CD4-positive, alpha-beta memory T cell (primary cell): ENCODE measurements at regions of chr17 and their contacts with region 1.

Region 1: GRCh38 chr17:75319904-75320691 is 30.9 kb upstream of the SLC25A19 start:
- DNase-seq: no peak
- H3K4me3 ChIP-seq: no peak overlapping the region
- H3K4me3 Mint-ChIP-seq: no peak overlapping the region
- H3K27ac ChIP-seq: no peak overlapping the region
- H3K27ac Mint-ChIP-seq: peak overlapping the region in 3 of 7 donors; percentile 2 to 32 (median 30)
- H3K4me1 ChIP-seq: peaks cover 10% of the 10 kb centered on the region
- H3K4me1 Mint-ChIP-seq: peaks cover 6 to 8% (median 7%) of the 10 kb centered on the region in 4 donors
- H3K27me3 ChIP-seq: no peaks in the 10 kb centered on the region
- H3K27me3 Mint-ChIP-seq: no peaks in the 10 kb centered on the region

Region 2: GRCh38 chr17:75338335-75338734 is 18.2 kb after region 1 on chr17:
- CTCF ChIA-PET with region 1: interaction called, 38 read pairs
- POLR2A ChIA-PET with region 1: interaction called, 9 read pairs
- intact Hi-C with region 1: no loop called
- DNase-seq: peak in 4 of 5 donors; percentile 27 to 38 (median 30)
- H3K4me3 ChIP-seq: no peak overlapping the region
- H3K4me3 Mint-ChIP-seq: peak overlapping the region; percentile 49 to 86 (median 74)
- H3K27ac ChIP-seq: peak overlapping the region; percentile 22
- H3K27ac Mint-ChIP-seq: peak overlapping the region; percentile 21 to 91 (median 76)
- H3K4me1 ChIP-seq: peaks cover 86% of the 10 kb centered on the region
- H3K4me1 Mint-ChIP-seq: peaks cover 54 to 84% (median 68%) of the 10 kb centered on the region in 4 donors
- H3K27me3 ChIP-seq: no peaks in the 10 kb centered on the region
- H3K27me3 Mint-ChIP-seq: no peaks in the 10 kb centered on the region

Region 3: DNA sequence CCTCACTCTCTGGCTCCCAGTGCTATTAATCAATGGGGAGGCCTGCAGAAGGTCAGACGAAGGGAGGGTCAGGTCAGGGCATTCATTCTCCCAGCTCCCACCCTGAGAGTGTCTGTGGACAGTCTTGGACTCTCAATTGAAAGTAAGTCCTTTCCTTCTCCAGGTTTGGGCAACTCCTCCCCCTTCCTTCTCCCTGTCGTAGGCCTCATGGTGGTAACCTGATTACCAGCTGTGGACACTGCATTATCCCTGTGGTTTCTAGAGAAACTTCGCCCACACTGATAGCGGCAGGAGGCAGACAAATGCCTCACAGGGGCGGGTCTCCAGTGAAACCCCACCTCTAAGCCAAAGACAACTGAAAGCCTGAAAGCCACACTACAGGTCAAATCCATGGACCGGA is 26.8 kb after region 1 on chr17:
- CTCF ChIA-PET with region 1: interaction called, 17 read pairs
- POLR2A ChIA-PET with region 1: interaction called, 9 read pairs
- intact Hi-C with region 1: no loop called
- DNase-seq: no peak
- H3K4me3 ChIP-seq: no peak overlapping the region
- H3K4me3 Mint-ChIP-seq: peak overlapping the region in 7 of 8 donors; percentile 59 to 92 (median 78)
- H3K27ac ChIP-seq: peak overlapping the region; percentile 25
- H3K27ac Mint-ChIP-seq: peak overlapping the region; percentile 76 to 95 (median 88)
- H3K4me1 ChIP-seq: peaks cover 97% of the 10 kb centered on the region
- H3K4me1 Mint-ChIP-seq: peaks cover 66 to 100% (median 86%) of the 10 kb centered on the region in 4 donors
- H3K27me3 ChIP-seq: no peaks in the 10 kb centered on the region
- H3K27me3 Mint-ChIP-seq: no peaks in the 10 kb centered on the region

Region 4: GRCh38 chr17:75364078-75364477 is 44.0 kb after region 1 on chr17:
- CTCF ChIA-PET with region 1: interaction called, 17 read pairs
- POLR2A ChIA-PET with region 1: interaction called, 3 read pairs
- intact Hi-C with region 1: no loop called
- DNase-seq: no peak
- H3K4me3 ChIP-seq: no peak overlapping the region
- H3K4me3 Mint-ChIP-seq: peak overlapping the region in 5 of 8 donors; percentile 2 to 69 (median 10)
- H3K27ac ChIP-seq: no peak overlapping the region
- H3K27ac Mint-ChIP-seq: peak overlapping the region in 4 of 7 donors; percentile 9 to 76 (median 18)
- H3K4me1 ChIP-seq: peaks cover 92% of the 10 kb centered on the region
- H3K4me1 Mint-ChIP-seq: peaks cover 69 to 96% (median 86%) of the 10 kb centered on the region in 4 donors
- H3K27me3 ChIP-seq: no peaks in the 10 kb centered on the region
- H3K27me3 Mint-ChIP-seq: no peaks in the 10 kb centered on the region

Region 5: DNA sequence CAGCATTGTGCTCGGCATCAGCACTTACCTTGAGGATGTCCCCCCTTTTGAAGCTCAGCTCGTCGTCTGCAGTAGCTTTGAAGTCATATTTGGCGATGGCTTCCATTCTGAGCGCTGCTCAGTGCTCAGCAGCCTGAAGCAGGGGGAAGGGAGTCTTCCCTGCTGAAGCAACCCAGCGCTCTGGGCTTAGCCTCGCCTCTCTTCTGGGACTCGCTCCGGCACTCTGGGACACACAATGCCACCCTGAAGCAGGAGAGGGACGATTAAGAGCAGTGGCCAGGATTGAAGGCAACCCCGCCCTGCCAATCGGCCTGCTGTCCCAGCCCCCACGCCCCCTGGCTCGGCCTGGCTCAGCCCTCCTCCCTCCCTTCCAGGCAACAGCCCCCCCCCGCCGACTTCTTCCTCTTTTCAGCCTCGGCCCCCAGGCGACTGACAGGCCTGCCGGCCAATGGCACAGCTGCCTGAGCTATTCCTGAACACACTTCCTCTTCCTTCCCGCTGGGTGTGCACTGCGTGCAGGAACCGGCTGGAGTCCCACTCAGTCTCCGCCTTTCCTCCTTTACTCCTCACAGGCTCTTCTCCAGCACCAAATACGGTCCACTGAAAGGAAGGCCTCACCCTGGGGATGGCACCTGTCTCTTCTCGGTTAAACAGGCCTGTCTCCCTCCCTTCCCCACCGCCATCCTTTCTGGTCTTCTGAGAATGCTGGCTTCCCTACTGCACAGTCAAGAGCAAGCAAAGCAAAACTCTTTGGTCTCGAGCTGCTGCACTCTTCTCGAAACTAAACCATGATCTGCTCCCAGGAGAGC is 73.6 kb after region 1 on chr17:
- CTCF ChIA-PET with region 1: interaction called, 61 read pairs
- POLR2A ChIA-PET with region 1: interaction called, 25 read pairs
- intact Hi-C with region 1: no loop called
- DNase-seq: peak; percentile 66 to 86 (median 75)
- H3K4me3 ChIP-seq: peak overlapping the region; percentile 30 to 60
- H3K4me3 Mint-ChIP-seq: peak overlapping the region; percentile 90 to 97 (median 95)
- H3K27ac ChIP-seq: peak overlapping the region; percentile 66
- H3K27ac Mint-ChIP-seq: peak overlapping the region; percentile 71 to 96 (median 89)
- H3K4me1 ChIP-seq: peaks cover 78% of the 10 kb centered on the region
- H3K4me1 Mint-ChIP-seq: peaks cover 63 to 88% (median 72%) of the 10 kb centered on the region in 4 donors
- H3K27me3 ChIP-seq: no peaks in the 10 kb centered on the region
- H3K27me3 Mint-ChIP-seq: no peaks in the 10 kb centered on the region

Region 6: DNA sequence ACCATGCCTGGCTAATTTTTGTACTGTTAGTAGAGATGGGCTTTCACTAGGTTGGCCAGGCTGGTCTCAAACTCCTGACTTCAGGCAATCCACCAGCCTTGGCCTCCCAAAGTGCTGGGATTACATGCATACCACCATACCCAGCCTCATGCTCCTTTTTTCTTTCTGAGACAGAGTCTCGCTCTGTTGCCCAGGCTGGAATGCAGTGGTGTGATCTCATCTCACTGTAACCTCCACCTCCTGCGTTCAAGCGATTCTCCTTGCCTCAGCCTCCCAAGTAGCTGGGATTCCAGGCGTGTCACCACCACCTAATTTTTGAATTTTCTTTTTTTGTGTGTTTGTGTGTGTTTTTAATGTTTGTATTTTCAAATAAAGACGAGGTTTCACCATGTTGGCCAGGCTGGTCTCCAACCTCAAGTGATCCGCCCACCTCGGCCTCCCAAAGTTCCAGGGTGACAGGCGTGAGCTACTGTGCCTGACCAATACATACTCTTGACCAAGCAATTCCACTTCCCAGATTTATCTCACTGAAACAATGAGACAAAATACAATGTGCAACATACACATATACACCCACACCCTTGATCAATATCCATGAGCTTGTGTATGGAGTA is 80.3 kb after region 1 on chr17:
- CTCF ChIA-PET with region 1: interaction called, 63 read pairs
- POLR2A ChIA-PET with region 1: interaction called, 25 read pairs
- intact Hi-C with region 1: loop called (anchors 1 kb)
- DNase-seq: no peak
- H3K4me3 ChIP-seq: no peak overlapping the region
- H3K4me3 Mint-ChIP-seq: peak overlapping the region in 5 of 8 donors; percentile 21 to 59 (median 46)
- H3K27ac ChIP-seq: no peak overlapping the region
- H3K27ac Mint-ChIP-seq: peak overlapping the region in 3 of 7 donors; percentile 46 to 59 (median 57)
- H3K4me1 ChIP-seq: peaks cover 77% of the 10 kb centered on the region
- H3K4me1 Mint-ChIP-seq: peaks cover 33 to 79% (median 55%) of the 10 kb centered on the region in 4 donors
- H3K27me3 ChIP-seq: no peaks in the 10 kb centered on the region
- H3K27me3 Mint-ChIP-seq: no peaks in the 10 kb centered on the region

Region 7: DNA sequence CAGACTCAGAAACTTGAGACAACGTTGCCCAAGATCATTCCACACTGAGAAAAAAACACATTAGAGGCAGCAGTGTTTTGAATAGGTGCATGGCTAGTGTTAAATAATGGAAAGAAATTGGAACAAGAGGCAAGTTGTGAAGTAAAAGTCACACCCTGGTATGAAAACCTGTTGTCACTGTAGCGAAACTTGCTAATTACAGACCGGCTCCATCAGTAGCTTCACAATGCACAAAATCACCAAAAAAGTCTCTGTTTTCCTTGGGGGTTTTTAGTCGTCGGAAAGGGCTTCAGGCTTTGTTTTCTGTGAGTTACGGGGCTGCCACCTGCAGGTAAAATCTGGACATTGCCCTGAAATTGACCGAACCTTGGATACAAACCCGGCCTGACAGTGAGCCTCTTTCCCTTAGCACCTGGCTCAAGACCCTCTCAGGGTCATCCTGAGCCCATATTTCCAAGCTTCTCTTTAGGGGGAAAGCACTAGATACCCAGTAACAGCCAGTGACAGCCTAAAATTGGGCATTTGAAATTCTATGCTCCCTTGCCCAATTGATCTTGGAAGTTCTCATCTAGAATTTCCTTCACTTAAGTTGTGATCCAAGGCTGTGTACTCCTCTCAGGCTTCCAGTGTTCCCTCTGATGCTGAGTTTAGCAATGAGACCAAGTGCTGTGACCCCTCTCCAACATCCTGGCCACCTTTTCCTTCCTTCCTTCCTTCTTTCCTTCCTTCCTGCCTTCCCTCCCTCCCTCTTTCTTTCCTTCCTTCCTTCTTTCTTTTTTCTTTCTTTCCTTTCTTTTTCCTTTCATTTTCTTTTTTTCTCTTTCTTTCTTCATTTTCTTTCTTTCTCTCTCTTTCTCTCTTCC is 92.6 kb after region 1 on chr17:
- CTCF ChIA-PET with region 1: interaction called, 43 read pairs
- POLR2A ChIA-PET with region 1: interaction called, 12 read pairs
- intact Hi-C with region 1: loop called (anchors 1 kb)
- DNase-seq: peak; percentile 66 to 79 (median 77)
- H3K4me3 ChIP-seq: no peak overlapping the region
- H3K4me3 Mint-ChIP-seq: peak overlapping the region in 7 of 8 donors; percentile 0 to 68 (median 6)
- H3K27ac ChIP-seq: no peak overlapping the region
- H3K27ac Mint-ChIP-seq: peak overlapping the region in 5 of 7 donors; percentile 0 to 29 (median 3)
- H3K4me1 ChIP-seq: peaks cover 13% of the 10 kb centered on the region
- H3K4me1 Mint-ChIP-seq: peaks cover 7 to 16% (median 11%) of the 10 kb centered on the region in 4 donors
- H3K27me3 ChIP-seq: no peaks in the 10 kb centered on the region
- H3K27me3 Mint-ChIP-seq: peaks cover 5 to 6% of the 10 kb centered on the region in 2 donors